Cardiac septum (tissue), 1 donor: ENCODE measurements at regions of chr17 and their contacts with region 1.

Region 1: DNA sequence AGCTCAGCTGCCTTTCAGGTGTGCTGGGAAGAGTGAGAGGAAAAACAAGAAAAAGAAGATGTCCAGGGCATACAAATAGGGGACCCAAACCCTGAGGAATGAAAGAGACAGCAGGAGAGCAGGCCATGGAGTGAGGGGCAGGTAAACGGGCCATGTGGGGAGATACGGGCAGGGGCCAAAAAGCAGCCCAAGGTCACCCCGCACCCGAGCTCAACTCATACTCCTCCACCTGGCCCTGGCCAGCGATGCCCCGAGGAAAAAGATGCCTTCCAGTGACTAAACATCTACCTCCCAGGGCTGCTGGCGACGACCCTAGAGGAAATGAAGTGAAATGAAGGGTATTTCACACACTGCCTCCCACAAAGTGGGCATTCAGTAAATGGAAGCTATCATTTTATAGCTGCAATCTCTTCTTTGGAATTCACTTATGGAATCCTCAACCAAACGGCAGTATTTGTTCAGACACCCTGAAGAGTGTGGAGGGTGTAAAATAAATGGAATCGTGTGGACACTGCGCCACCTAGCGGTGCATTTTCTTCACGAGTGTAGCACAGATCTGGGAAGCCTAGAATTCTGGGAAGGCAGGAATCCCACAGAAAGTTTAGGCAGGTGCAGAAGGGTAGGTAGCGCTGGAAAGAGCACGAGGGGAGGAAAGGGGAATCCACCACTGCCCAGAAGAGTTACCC is 14.9 kb downstream of the ELAC2 start:
- DNase-seq: peak; percentile 84

Region 2: GRCh38 chr17:12180644-12181261 is 822.2 kb before region 1 on chr17:
- intact Hi-C with region 1: loop called (anchors 2 kb)
- DNase-seq: no peak

Region 3: GRCh38 chr17:12940699-12941098 is 62.2 kb before region 1 on chr17:
- intact Hi-C with region 1: no loop called
- DNase-seq: no peak